Gastrocnemius medialis (tissue), 4 donors: ENCODE measurements at regions of chr20 and their contacts with region 1.

Region 1: GRCh38 chr20:24160563-24161375 is 172.2 kb upstream of the GGTLC1 start:
- DNase-seq: no peak
- ATAC-seq: peak in 1 of 2 donors; percentile 49
- H3K4me3 ChIP-seq: no peak overlapping the region
- H3K27ac ChIP-seq: no peak overlapping the region
- H3K4me1 ChIP-seq: no peaks in the 10 kb centered on the region
- H3K27me3 ChIP-seq: no peaks in the 10 kb centered on the region
- CTCF ChIP-seq: peak in 4 of 5 experiments; percentile 6 to 43 (median 31)
- POLR2A ChIP-seq: no peak

Region 2: GRCh38 chr20:24066076-24066700 is 94.6 kb before region 1 on chr20:
- in situ Hi-C with region 1: loop called in 1 of 4 experiments (anchors 25 kb)
- intact Hi-C with region 1: no loop called
- DNase-seq: no peak
- ATAC-seq: no peak
- H3K4me3 ChIP-seq: no peak overlapping the region
- H3K27ac ChIP-seq: no peak overlapping the region
- H3K4me1 ChIP-seq: no peaks in the 10 kb centered on the region
- H3K27me3 ChIP-seq: no peaks in the 10 kb centered on the region
- CTCF ChIP-seq: no peak
- POLR2A ChIP-seq: no peak

Region 3: DNA sequence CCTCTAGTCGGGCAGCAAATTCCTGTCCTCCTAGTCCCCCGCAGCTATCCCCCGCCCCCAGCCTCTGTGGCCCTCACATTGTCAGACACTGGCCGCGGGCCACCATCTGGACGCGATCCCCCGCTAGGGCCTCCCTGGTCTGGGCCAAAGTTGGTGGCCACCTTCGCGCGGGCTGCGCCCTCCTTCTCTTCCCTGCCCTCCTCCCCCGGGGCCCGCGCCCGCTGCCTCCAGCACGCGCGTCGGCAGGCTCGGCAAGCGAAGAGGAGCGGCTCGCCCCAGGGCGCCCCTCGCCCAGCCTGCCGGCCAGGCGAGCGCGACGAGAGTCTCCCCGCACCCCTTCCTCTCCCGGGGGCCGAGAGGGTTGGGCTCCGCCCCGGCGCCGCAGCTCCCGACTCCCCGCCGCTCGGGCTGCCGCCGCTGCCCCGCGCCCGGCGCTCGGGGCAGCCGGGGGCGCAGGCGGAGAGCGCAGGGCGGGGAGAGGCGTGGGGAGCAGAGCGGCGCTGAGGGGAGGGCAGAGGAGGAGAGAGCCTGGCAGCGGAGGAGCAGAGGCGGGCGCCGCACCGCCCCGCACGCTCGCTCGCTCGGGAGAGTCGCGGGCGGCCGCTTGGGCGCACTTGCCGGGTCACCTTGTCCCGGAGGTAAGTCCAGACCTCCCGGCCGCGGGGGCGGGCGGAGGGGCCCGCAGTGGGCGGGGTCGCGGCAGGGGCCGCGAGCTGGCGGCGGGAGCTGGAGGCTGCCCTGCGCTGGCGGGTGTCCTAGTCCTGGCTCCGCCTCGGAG is 308.5 kb after region 1 on chr20 and contains the start of gene SYNDIG1:
- in situ Hi-C with region 1: loop called in 1 of 4 experiments (anchors 25 kb)
- intact Hi-C with region 1: no loop called
- DNase-seq: no peak
- ATAC-seq: no peak
- H3K4me3 ChIP-seq: peak within 1 kb of the TSS in 3 of 4 donors; percentile 22 to 39 (median 38)
- H3K27ac ChIP-seq: no peak within 1 kb of the TSS
- H3K4me1 ChIP-seq: no peaks in the 10 kb centered on the region
- H3K27me3 ChIP-seq: peaks cover 28 to 38% (median 35%) of the 10 kb centered on the region in 3 donors
- CTCF ChIP-seq: no peak
- POLR2A ChIP-seq: no peak
- total RNA-seq, gene SYNDIG1: 0.20 to 1.3 (median 0.66) TPM in 3 of 4 donors, not detected in the other

Region 4: DNA sequence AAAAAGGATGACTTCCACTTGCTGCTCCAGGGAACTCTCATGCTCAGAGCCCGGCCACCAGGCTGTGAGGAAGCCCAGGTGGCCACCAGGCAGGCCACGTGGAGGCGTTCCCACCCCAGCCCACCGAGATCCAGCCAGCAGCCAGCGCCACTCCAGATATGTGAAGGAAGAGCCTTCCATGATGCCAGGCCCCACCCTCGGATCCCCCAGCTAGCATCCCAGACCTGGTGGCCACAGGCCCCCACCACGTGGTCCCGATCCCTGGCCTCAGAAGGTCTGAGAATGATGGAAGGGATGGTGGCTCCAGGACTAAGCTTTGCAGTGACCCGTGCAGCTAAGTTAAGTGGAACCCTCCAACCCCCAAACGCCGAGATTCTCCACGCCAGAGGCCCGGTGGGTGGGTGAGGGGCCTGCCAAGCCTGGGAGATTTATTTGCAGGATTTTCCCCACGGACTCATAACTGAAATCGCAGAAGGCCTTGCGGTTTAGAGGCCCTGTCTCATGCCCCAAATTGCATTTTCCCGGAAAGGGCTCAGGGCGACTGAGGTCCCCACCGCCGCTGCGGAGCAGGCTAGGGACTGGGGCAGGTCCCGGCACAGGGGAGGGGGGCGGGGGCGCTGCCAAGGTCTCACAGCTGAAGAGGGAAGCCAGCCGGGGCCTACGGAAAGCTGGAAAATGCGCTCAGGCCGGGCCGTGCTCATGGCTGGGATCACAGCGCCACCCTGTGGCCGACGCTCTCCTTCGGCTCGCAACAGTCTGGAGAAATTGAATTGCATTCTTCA is 757.2 kb after region 1 on chr20:
- in situ Hi-C with region 1: loop called in 3 of 4 experiments (anchors 10 to 25 kb)
- intact Hi-C with region 1: loop called (anchors 5 kb)
- DNase-seq: peak in 1 of 2 donors; percentile 29
- ATAC-seq: peak in 1 of 2 donors; percentile 70
- H3K4me3 ChIP-seq: peak overlapping the region in 1 of 4 donors; percentile 38
- H3K27ac ChIP-seq: no peak overlapping the region
- H3K4me1 ChIP-seq: peaks cover 0 to 7% of the 10 kb centered on the region in 2 donors
- H3K27me3 ChIP-seq: no peaks in the 10 kb centered on the region
- CTCF ChIP-seq: peak; percentile 46 to 72 (median 64)
- POLR2A ChIP-seq: no peak